CD8-positive, alpha-beta T cell (primary cell): ENCODE measurements at regions of chr3 and their contacts with region 1.

Region 1: DNA sequence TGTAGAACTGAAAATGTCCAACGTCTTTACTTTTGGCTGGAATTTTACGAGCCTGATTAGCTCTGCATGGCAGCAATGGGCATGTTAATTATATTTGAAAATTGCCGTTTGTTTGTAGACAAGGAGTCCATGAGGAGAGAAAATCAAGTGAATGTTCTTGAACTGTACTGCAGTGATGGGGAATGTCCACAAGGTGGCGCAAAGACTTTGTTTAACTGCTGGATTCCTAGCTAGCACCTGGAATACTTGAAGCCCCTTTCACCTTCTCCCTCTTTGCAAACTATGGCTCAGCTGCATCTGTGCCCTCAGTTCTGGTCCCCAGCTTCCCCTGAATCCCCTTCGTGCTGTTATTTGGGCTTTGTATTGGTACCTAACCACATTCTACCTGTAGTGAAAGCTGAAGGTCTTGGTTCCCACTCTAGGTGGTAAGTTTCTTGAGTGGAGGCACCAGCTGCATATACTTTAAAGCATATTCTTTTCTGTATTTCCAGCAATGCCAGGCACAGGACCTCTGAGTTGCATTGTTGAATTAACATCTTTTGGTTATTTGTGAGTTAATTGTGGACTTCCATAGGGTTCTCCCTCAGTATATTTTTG is 25.3 kb downstream of the EXOG start:
- DNase-seq: peak; percentile 24 to 80 (median 65)
- ATAC-seq: peak; percentile 67
- H3K4me3 ChIP-seq: no peak overlapping the region
- H3K4me3 Mint-ChIP-seq: no peak overlapping the region
- H3K27ac ChIP-seq: no peak overlapping the region
- H3K27ac Mint-ChIP-seq: no peak overlapping the region
- H3K4me1 ChIP-seq: peaks cover 30% of the 10 kb centered on the region
- H3K4me1 Mint-ChIP-seq: peaks cover 34% of the 10 kb centered on the region
- H3K27me3 ChIP-seq: no peaks in the 10 kb centered on the region
- H3K27me3 Mint-ChIP-seq: no peaks in the 10 kb centered on the region
- CTCF ChIP-seq: peak; percentile 83

Region 2: GRCh38 chr3:38507120-38507519 is 14.4 kb before region 1 on chr3:
- CTCF ChIA-PET with region 1: interaction called, 36 read pairs
- POLR2A ChIA-PET with region 1: no interaction called
- intact Hi-C with region 1: no loop called
- DNase-seq: no peak
- ATAC-seq: no peak
- H3K4me3 ChIP-seq: no peak overlapping the region
- H3K4me3 Mint-ChIP-seq: no peak overlapping the region
- H3K27ac ChIP-seq: no peak overlapping the region
- H3K27ac Mint-ChIP-seq: no peak overlapping the region
- H3K4me1 ChIP-seq: no peaks in the 10 kb centered on the region
- H3K4me1 Mint-ChIP-seq: no peaks in the 10 kb centered on the region
- H3K27me3 ChIP-seq: no peaks in the 10 kb centered on the region
- H3K27me3 Mint-ChIP-seq: no peaks in the 10 kb centered on the region
- CTCF ChIP-seq: no peak

Region 3: GRCh38 chr3:38543586-38543985 is 22.1 kb after region 1 on chr3:
- CTCF ChIA-PET with region 1: interaction called, 14 read pairs
- POLR2A ChIA-PET with region 1: no interaction called
- intact Hi-C with region 1: no loop called
- DNase-seq: no peak
- ATAC-seq: no peak
- H3K4me3 ChIP-seq: no peak overlapping the region
- H3K4me3 Mint-ChIP-seq: no peak overlapping the region
- H3K27ac ChIP-seq: no peak overlapping the region
- H3K27ac Mint-ChIP-seq: no peak overlapping the region
- H3K4me1 ChIP-seq: no peaks in the 10 kb centered on the region
- H3K4me1 Mint-ChIP-seq: no peaks in the 10 kb centered on the region
- H3K27me3 ChIP-seq: no peaks in the 10 kb centered on the region
- H3K27me3 Mint-ChIP-seq: no peaks in the 10 kb centered on the region
- CTCF ChIP-seq: no peak

Region 4: DNA sequence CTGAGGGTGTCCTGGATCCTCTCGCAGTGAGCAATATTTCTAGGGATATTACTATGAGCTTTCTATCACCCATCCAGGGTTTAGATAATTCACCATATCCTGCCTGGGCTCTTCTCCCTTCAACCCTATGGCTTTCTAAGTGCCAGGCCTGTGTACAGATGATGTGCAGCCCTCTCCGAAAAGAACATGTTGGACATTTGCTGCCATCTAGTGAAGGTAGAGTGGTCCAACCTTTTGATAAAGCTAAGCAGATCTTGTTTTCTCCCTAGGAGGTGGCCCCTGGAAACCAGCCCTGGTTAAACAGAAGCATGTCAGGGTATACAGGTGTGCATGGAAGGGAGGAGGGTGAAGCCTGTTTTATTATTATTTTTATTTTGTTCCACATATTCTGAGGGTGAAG is 322.4 kb after region 1 on chr3:
- CTCF ChIA-PET with region 1: interaction called, 5 read pairs
- POLR2A ChIA-PET with region 1: no interaction called
- intact Hi-C with region 1: loop called in 1 of 2 experiments (anchors 5 kb)
- DNase-seq: peak in 1 of 9 experiments; percentile 16
- ATAC-seq: no peak
- H3K4me3 ChIP-seq: no peak overlapping the region
- H3K4me3 Mint-ChIP-seq: no peak overlapping the region
- H3K27ac ChIP-seq: no peak overlapping the region
- H3K27ac Mint-ChIP-seq: no peak overlapping the region
- H3K4me1 ChIP-seq: no peaks in the 10 kb centered on the region
- H3K4me1 Mint-ChIP-seq: no peaks in the 10 kb centered on the region
- H3K27me3 ChIP-seq: no peaks in the 10 kb centered on the region
- H3K27me3 Mint-ChIP-seq: peaks cover 24% of the 10 kb centered on the region
- CTCF ChIP-seq: no peak

Region 5: DNA sequence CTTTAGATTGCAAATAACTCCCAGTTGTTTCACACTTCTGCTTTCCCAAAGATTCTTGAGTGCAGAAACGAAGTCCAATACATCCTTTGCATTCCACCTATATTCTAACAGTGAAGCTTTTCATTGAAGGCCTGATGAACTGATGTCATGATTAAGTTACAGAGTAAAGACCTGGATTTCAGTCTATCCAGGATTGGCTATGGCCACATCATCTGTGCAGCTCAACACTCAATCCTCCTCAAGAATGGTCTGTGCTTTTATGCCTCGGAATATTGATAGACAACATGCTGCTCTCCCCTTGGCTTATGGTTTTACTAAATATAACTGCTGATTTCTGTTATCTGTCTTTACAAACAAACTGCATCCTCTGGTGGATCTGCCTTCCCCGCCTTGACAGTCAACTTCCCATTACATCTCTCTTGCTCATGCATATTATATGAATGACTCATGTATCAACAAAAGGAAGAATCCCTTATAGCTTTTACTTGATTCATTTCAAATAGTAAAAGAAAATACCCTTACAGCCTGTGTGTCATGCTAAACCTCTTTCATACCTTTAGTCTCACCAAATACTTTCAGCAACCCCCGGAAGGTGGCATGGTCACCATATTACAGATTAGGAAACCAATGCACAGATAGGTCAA is 470.8 kb after region 1 on chr3:
- CTCF ChIA-PET with region 1: no interaction called
- POLR2A ChIA-PET with region 1: no interaction called
- intact Hi-C with region 1: loop called in 1 of 2 experiments (anchors 10 kb)
- DNase-seq: no peak
- ATAC-seq: no peak
- H3K4me3 ChIP-seq: no peak overlapping the region
- H3K4me3 Mint-ChIP-seq: no peak overlapping the region
- H3K27ac ChIP-seq: no peak overlapping the region
- H3K27ac Mint-ChIP-seq: no peak overlapping the region
- H3K4me1 ChIP-seq: no peaks in the 10 kb centered on the region
- H3K4me1 Mint-ChIP-seq: no peaks in the 10 kb centered on the region
- H3K27me3 ChIP-seq: no peaks in the 10 kb centered on the region
- H3K27me3 Mint-ChIP-seq: peaks cover 30% of the 10 kb centered on the region
- CTCF ChIP-seq: no peak